ENCODE measurements at regions of chrX and their contacts with region 1.

Region 1: GRCh38 chrX:53081925-53082772 is at the start of gene TSPYL2:
- DNase-seq: peak; percentile 89
- H3K4me3 Mint-ChIP-seq: peak within 1 kb of the TSS; percentile 94
- H3K27ac Mint-ChIP-seq: peak within 1 kb of the TSS; percentile 99
- H3K4me1 Mint-ChIP-seq: peaks cover 29% of the 10 kb centered on the region
- H3K27me3 Mint-ChIP-seq: no peaks in the 10 kb centered on the region
- total RNA-seq, gene TSPYL2: 37.5 and 40.3 TPM in 2 replicates

Region 2: DNA sequence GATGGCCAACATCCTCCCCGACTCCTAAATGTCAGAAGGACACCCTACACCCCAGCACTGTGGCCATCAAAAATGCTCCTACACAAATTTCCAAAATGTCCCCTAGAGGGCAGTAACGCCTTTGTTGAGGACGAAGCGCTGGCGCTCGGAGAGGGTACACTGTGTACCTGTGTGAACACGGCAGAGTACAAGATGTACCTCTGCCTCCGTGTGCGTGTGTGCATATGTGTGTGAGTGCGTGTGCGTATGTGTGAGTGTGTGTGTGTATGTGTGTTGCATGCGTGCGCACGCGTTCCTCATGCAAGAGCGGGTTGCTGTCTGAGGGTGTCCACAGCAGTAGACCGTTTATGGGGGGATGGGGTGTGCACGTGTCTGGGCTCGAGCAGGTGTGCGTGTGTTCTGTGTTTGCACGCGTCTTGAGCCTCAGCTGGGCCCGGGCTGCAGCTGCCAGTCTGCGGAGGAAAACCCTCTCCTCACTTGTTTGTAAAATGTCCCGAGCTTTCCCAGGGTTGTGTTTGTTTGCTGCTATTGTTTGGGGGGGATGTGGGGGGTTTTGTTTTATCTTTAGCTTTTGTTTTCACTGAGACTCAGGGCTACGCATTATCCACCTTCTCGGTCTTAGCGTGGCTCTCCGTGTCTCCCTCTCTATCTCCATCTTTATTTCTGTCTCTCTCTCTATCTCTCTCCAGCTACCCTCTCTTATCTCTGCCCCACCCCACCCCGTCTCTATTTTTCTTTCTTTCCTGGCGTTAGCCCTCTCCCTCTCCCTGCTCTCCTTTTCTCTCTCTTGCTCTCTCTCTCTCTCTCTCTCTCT is 10.3 kb before region 1 on chrX:
- intact Hi-C with region 1: loop called (anchors 1 kb)
- DNase-seq: peak; percentile 52
- H3K4me3 Mint-ChIP-seq: peak overlapping the region; percentile 75
- H3K27ac Mint-ChIP-seq: peak overlapping the region; percentile 84
- H3K4me1 Mint-ChIP-seq: peaks cover 23% of the 10 kb centered on the region
- H3K27me3 Mint-ChIP-seq: peaks cover 3% of the 10 kb centered on the region

Region 3: GRCh38 chrX:53116101-53116500 is 34.0 kb after region 1 on chrX:
- intact Hi-C with region 1: no loop called
- DNase-seq: no peak
- H3K4me3 Mint-ChIP-seq: no peak overlapping the region
- H3K27ac Mint-ChIP-seq: peak overlapping the region; percentile 15
- H3K4me1 Mint-ChIP-seq: peaks cover 5% of the 10 kb centered on the region
- H3K27me3 Mint-ChIP-seq: no peaks in the 10 kb centered on the region